Sciatic nerve (tissue), 2 donors: ENCODE measurements at regions of chr1 and their contacts with region 1.

Region 1: DNA sequence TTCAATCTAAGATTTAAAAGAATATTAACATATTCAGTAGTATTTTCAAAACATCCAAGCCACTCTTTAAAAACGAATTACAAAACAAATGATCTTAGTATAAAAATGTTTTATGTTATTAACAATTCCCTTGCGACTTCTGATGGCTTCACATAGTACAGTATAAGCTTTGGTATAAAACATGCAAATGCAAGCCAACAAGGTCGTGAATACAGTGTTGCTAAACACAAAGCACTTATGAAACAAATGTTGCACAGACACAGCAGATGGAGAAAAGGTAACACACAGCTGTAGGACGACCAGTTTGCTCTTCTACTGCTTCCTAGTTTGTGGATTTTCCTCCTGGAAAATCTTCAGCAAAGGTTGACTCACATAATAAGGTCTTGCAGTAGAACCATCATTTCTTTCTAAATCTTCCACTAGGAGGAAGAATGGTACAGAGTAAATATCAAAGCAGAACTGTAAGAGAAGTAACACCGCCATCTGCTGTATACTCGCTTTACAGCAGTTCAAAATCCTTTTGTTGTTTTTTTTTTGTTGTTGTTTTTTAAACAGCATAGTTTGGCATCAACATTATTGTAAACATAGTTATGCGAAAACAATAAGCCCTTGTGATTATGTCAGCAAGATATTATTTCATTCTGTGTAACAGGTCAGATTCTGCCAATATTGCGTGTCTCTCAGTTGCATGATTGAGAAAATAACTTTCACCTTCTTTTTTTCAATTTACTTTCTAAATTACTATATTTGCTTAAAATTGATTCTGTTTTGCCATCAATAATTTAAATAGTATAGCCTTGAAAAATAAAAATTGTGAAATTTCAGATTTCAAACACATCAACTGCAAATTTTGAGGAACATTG is 69.5 kb downstream of the LHX8 start:
- DNase-seq: no peak
- ATAC-seq: peak; percentile 59

Region 2: DNA sequence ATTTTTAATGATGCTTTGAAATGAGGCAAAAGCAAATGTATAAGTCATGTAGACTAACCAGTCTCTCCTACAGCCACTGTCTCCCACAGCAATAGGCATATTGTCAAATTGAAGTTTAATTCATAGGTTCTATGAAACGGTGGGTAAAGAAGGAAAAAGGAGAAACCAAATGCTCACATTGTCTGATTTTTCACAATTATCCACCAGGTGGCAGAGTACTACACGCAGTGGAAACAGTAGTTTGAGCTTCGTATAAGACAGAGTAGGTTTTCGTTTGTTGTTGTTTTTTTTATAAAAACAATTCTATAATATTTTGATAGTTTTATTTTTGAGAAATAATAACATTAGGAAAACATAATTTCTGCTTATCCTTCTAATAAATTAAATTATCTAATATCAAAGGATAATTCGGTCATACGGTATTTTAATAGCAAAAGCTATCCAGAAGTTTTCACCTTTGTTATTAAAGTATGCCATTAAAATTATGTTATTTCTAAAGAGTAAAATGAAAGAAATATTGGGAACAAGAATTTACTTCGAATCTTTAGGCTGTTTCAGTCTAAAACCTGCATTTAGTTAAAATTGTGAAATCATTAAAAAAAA is 431.6 kb before region 1 on chr1:
- intact Hi-C with region 1: loop called (anchors 10 kb)
- DNase-seq: no peak
- ATAC-seq: peak; percentile 46

Region 3: GRCh38 chr1:75707191-75707590 is 503.5 kb after region 1 on chr1:
- intact Hi-C with region 1: no loop called
- DNase-seq: no peak
- ATAC-seq: no peak